Sigmoid colon (tissue), 7 donors: ENCODE measurements at regions of chr7 and their contacts with region 1.

Region 1: GRCh38 chr7:140653319-140654108 is 12.9 kb upstream of the DENND2A start:
- DNase-seq: peak; percentile 85
- H3K4me3 ChIP-seq: no peak overlapping the region
- H3K27ac ChIP-seq: peak overlapping the region in 1 of 4 donors; percentile 14
- H3K4me1 ChIP-seq: peaks cover 0 to 25% (median 17%) of the 10 kb centered on the region in 4 donors
- H3K27me3 ChIP-seq: no peaks in the 10 kb centered on the region
- CTCF ChIP-seq: peak; percentile 88 to 94 (median 89)
- EP300 ChIP-seq: no peak
- POLR2A ChIP-seq: no peak

Region 2: GRCh38 chr7:140479062-140479738 is 174.3 kb before region 1 on chr7 and contains the start of gene MKRN1:
- intact Hi-C with region 1: loop called (anchors 2 kb)
- DNase-seq: peak; percentile 96
- H3K4me3 ChIP-seq: peak within 1 kb of the TSS; percentile 86 to 99 (median 98)
- H3K27ac ChIP-seq: peak within 1 kb of the TSS; percentile 87 to 96 (median 90)
- H3K4me1 ChIP-seq: peaks cover 0 to 34% (median 22%) of the 10 kb centered on the region in 4 donors
- H3K27me3 ChIP-seq: no peaks in the 10 kb centered on the region
- CTCF ChIP-seq: no peak
- EP300 ChIP-seq: no peak
- POLR2A ChIP-seq: peak; percentile 47 to 79
- total RNA-seq, gene MKRN1: 63.5 to 73.7 (median 69.4) TPM